CD4-positive, alpha-beta T cell (primary cell): ENCODE measurements at regions of chr1 and their contacts with region 1.

Region 1: GRCh38 chr1:30718636-30719405 is 4.6 kb downstream of the MATN1 start:
- DNase-seq: peak in 13 of 14 experiments; percentile 71 to 98 (median 78)
- ATAC-seq: peak; percentile 62
- H3K4me3 ChIP-seq: peak overlapping the region; percentile 75
- H3K4me3 Mint-ChIP-seq: peak overlapping the region; percentile 95
- H3K27ac ChIP-seq: peak overlapping the region; percentile 100
- H3K27ac Mint-ChIP-seq: peak overlapping the region; percentile 92
- H3K4me1 ChIP-seq: peaks cover 51% of the 10 kb centered on the region
- H3K4me1 Mint-ChIP-seq: peaks cover 30% of the 10 kb centered on the region
- H3K27me3 ChIP-seq: no peaks in the 10 kb centered on the region
- H3K27me3 Mint-ChIP-seq: no peaks in the 10 kb centered on the region
- CTCF ChIP-seq: peak; percentile 97

Region 2: GRCh38 chr1:30697571-30698376 is 21.0 kb before region 1 on chr1:
- CTCF ChIA-PET with region 1: no interaction called
- POLR2A ChIA-PET with region 1: no interaction called
- intact Hi-C with region 1: no loop called
- DNase-seq: no peak
- ATAC-seq: no peak
- H3K4me3 ChIP-seq: no peak overlapping the region
- H3K4me3 Mint-ChIP-seq: no peak overlapping the region
- H3K27ac ChIP-seq: no peak overlapping the region
- H3K27ac Mint-ChIP-seq: no peak overlapping the region
- H3K4me1 ChIP-seq: no peaks in the 10 kb centered on the region
- H3K4me1 Mint-ChIP-seq: no peaks in the 10 kb centered on the region
- H3K27me3 ChIP-seq: no peaks in the 10 kb centered on the region
- H3K27me3 Mint-ChIP-seq: no peaks in the 10 kb centered on the region
- CTCF ChIP-seq: no peak

Region 3: GRCh38 chr1:30732277-30732996 is 13.6 kb after region 1 on chr1:
- CTCF ChIA-PET with region 1: interaction called, 7 read pairs
- POLR2A ChIA-PET with region 1: interaction called, 10 read pairs
- intact Hi-C with region 1: no loop called
- DNase-seq: no peak
- ATAC-seq: peak; percentile 73
- H3K4me3 ChIP-seq: no peak overlapping the region
- H3K4me3 Mint-ChIP-seq: no peak overlapping the region
- H3K27ac ChIP-seq: no peak overlapping the region
- H3K27ac Mint-ChIP-seq: peak overlapping the region; percentile 96
- H3K4me1 ChIP-seq: peaks cover 26% of the 10 kb centered on the region
- H3K4me1 Mint-ChIP-seq: peaks cover 19% of the 10 kb centered on the region
- H3K27me3 ChIP-seq: no peaks in the 10 kb centered on the region
- H3K27me3 Mint-ChIP-seq: no peaks in the 10 kb centered on the region
- CTCF ChIP-seq: no peak

Region 4: DNA sequence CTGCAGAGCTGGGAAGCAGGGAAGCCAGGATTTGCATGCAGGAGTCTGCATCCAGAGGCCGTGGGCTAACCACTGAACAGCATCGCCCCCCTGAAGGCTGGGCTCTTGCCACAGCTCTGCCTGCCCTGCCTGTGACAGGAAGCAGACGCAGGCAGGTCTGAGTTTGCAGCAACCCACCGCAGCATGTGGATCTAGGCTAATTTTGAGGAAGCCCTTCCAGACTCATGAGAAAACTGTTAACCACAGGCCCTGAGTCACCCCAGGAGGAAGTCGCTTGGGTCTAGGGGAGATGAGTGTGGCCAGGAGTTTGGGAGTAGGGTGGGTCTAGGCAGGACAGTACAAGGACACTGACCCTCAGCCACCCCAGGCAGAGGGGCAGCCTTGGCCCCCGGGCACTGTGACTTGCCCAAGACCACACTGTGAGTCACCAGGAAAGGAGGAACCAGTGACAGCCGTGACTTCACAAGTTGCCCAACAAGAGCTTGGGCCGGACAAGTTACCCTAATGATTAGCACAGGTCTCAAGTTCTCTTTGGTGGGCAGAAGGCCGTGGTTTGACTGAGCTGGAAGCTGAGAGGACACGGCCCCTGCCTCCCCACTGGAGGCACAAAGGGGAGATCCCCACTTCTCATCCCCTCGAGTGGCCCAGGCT is 37.8 kb after region 1 on chr1:
- CTCF ChIA-PET with region 1: interaction called, 35 read pairs
- POLR2A ChIA-PET with region 1: interaction called, 98 read pairs
- intact Hi-C with region 1: loop called in 1 of 2 experiments (anchors 2 kb)
- DNase-seq: peak; percentile 48 to 91 (median 71)
- ATAC-seq: peak; percentile 64
- H3K4me3 ChIP-seq: peak overlapping the region; percentile 99
- H3K4me3 Mint-ChIP-seq: peak overlapping the region; percentile 96
- H3K27ac ChIP-seq: peak overlapping the region; percentile 95 to 97
- H3K27ac Mint-ChIP-seq: peak overlapping the region; percentile 96
- H3K4me1 ChIP-seq: peaks cover 91% of the 10 kb centered on the region
- H3K4me1 Mint-ChIP-seq: peaks cover 98% of the 10 kb centered on the region
- H3K27me3 ChIP-seq: no peaks in the 10 kb centered on the region
- H3K27me3 Mint-ChIP-seq: no peaks in the 10 kb centered on the region
- CTCF ChIP-seq: no peak

Region 5: DNA sequence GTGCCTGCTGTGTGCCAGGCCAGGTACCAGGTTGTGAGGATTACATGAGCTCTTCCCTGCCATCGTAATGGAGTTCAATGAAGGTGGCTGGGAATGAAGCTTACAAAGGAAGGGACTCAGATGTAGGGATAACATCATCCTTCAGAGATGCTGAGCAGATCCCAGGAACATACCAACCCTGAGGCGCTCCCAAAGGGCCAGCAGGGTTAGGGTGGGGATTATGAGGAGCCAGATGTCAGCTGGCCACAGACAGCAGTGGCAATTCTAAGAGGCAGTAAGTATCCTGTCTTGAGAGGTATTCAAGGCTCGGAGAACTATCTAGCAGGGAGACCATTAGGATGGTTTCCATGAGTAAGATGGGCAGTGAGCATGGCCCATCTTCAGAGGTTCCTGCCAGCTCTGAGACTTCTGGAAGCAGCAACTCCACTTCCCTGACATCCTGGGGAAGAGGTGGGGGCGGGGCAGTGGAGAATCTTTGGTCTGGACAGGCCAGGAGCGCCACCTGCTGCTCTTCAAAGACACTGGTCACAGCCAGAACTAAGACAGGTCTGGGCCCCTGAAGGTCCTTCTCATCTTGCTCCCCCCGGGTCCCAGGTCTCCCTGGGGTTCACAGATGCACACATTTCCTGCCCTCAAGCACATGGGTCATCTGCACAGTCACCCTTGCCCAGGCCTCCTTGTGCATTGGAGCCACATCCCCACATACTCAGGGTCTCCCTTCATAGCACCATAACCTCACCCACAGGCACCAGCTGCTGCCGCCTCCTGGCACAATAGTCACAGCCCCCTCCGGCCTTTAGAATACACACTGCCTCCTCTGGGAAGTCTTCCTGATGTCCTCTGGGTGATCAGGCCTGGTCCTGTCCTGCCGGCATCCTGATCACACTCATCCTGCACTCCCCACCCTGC is 192.5 kb after region 1 on chr1:
- CTCF ChIA-PET with region 1: interaction called, 4 read pairs
- POLR2A ChIA-PET with region 1: interaction called, 3 read pairs
- intact Hi-C with region 1: loop called in 1 of 2 experiments (anchors 5 kb)
- DNase-seq: peak in 12 of 14 experiments; percentile 11 to 71 (median 38)
- ATAC-seq: no peak
- H3K4me3 ChIP-seq: no peak overlapping the region
- H3K4me3 Mint-ChIP-seq: peak overlapping the region; percentile 72
- H3K27ac ChIP-seq: no peak overlapping the region
- H3K27ac Mint-ChIP-seq: no peak overlapping the region
- H3K4me1 ChIP-seq: peaks cover 32% of the 10 kb centered on the region
- H3K4me1 Mint-ChIP-seq: peaks cover 16% of the 10 kb centered on the region
- H3K27me3 ChIP-seq: peaks cover 22 to 32% of the 10 kb centered on the region in 2 experiments
- H3K27me3 Mint-ChIP-seq: peaks cover 27% of the 10 kb centered on the region
- CTCF ChIP-seq: peak; percentile 60

Region 6: DNA sequence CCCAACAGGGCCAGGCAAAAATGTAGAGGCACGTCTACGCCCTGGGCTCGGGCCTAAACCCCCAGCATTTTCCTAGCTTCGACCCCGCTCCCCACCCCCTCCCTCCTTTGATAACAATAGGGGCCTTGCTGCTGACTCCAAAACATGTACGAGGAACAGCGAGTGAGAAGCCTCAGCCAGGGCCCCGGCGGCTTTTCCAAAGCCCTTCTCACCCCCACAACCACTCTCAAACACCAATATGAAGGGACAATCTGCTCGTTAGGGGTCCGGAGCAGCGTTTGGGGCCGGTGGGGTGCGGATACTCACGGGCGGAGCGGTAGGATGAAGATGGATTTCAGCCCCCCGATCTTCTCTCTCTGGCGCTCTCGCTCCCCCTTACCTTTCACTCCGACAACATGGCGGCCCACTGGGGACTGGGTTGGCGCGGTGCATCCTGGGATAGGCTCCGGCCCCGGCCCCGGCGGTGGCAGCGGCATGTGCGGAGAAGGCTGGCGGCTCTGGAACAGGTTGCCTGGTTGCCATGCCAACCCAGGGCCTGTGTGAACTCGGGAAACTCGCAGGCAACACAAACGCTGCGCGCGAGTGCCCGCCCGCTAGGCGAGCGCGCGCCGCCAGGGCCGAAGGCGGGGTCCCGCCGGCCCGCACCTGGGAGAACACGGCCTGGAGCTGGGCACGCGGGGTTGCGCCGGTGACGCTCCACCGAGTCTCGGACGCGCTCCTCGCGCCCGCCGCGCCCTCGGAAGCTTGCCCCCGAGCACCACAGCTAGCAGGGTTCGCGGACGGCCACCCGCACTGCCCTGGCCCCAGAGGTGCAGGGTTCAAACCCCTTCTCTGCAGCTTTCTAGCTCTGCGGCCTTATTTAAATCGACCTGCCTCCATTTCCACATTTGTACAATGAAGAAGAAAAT is 346.7 kb after region 1 on chr1 and contains the start of gene PUM1:
- CTCF ChIA-PET with region 1: no interaction called
- POLR2A ChIA-PET with region 1: no interaction called
- intact Hi-C with region 1: loop called in 1 of 2 experiments (anchors 10 kb)
- DNase-seq: peak; percentile 96 to 99 (median 98)
- ATAC-seq: peak; percentile 96
- H3K4me3 ChIP-seq: peak within 1 kb of the TSS; percentile 71
- H3K4me3 Mint-ChIP-seq: peak within 1 kb of the TSS; percentile 93
- H3K27ac ChIP-seq: peak within 1 kb of the TSS; percentile 89 to 92
- H3K27ac Mint-ChIP-seq: peak within 1 kb of the TSS; percentile 95
- H3K4me1 ChIP-seq: peaks cover 29% of the 10 kb centered on the region
- H3K4me1 Mint-ChIP-seq: peaks cover 34% of the 10 kb centered on the region
- H3K27me3 ChIP-seq: no peaks in the 10 kb centered on the region
- H3K27me3 Mint-ChIP-seq: no peaks in the 10 kb centered on the region
- CTCF ChIP-seq: no peak
- total RNA-seq, gene PUM1: 190 to 202 TPM

Region 7: GRCh38 chr1:31296486-31297276 is 577.9 kb after region 1 on chr1 and contains the starts of genes SNRNP40 and ZCCHC17:
- CTCF ChIA-PET with region 1: no interaction called
- POLR2A ChIA-PET with region 1: interaction called, 4 read pairs
- intact Hi-C with region 1: loop called in 1 of 2 experiments (anchors 2 kb)
- DNase-seq: peak; percentile 84 to 99 (median 90)
- ATAC-seq: peak; percentile 94
- H3K4me3 ChIP-seq: peak within 1 kb of the TSS; percentile 90
- H3K4me3 Mint-ChIP-seq: no peak within 1 kb of the TSS
- H3K27ac ChIP-seq: peak within 1 kb of the TSS; percentile 83 to 91
- H3K27ac Mint-ChIP-seq: no peak within 1 kb of the TSS
- H3K4me1 ChIP-seq: peaks cover 41% of the 10 kb centered on the region
- H3K4me1 Mint-ChIP-seq: peaks cover 13% of the 10 kb centered on the region
- H3K27me3 ChIP-seq: no peaks in the 10 kb centered on the region
- H3K27me3 Mint-ChIP-seq: no peaks in the 10 kb centered on the region
- CTCF ChIP-seq: no peak
- total RNA-seq, gene SNRNP40: 48.4 to 53.7 TPM
- total RNA-seq, gene ZCCHC17: 7.3 to 7.6 TPM